CD4-positive, alpha-beta T cell (primary cell): ENCODE measurements at regions of chr1 and their contacts with region 1.

Region 1: DNA sequence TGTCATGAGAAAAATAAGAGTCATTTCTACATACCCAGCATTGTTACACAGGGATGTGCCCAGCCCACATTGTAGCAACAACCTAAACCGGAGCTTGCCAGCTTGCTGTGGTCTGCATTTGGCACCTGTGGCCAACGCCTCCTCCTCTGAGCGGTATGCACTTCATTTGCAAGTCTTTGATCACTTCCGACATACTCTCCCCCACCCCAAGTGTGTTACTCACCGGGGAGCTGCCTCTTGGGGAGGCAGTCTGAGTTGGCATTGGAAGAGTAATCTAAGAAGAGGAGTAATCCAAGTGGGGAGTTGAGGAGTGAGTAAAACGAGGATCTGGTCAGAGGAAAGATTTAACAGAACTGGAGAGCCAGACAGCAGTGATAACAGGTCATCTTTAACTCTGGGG is 3.8 kb downstream of the BCL9 start:
- DNase-seq: peak; percentile 64 to 95 (median 81)
- ATAC-seq: peak; percentile 80
- H3K4me3 ChIP-seq: no peak overlapping the region
- H3K4me3 Mint-ChIP-seq: no peak overlapping the region
- H3K27ac ChIP-seq: no peak overlapping the region
- H3K27ac Mint-ChIP-seq: no peak overlapping the region
- H3K4me1 ChIP-seq: peaks cover 56% of the 10 kb centered on the region
- H3K4me1 Mint-ChIP-seq: peaks cover 71% of the 10 kb centered on the region
- H3K27me3 ChIP-seq: no peaks in the 10 kb centered on the region
- H3K27me3 Mint-ChIP-seq: no peaks in the 10 kb centered on the region
- CTCF ChIP-seq: no peak

Region 2: GRCh38 chr1:147515046-147515869 is 29.9 kb before region 1 on chr1:
- CTCF ChIA-PET with region 1: interaction called, 3 read pairs
- POLR2A ChIA-PET with region 1: interaction called, 11 read pairs
- intact Hi-C with region 1: no loop called
- DNase-seq: peak in 4 of 14 experiments; percentile 34 to 55 (median 45)
- ATAC-seq: peak; percentile 70
- H3K4me3 ChIP-seq: no peak overlapping the region
- H3K4me3 Mint-ChIP-seq: no peak overlapping the region
- H3K27ac ChIP-seq: no peak overlapping the region
- H3K27ac Mint-ChIP-seq: no peak overlapping the region
- H3K4me1 ChIP-seq: no peaks in the 10 kb centered on the region
- H3K4me1 Mint-ChIP-seq: peaks cover 7% of the 10 kb centered on the region
- H3K27me3 ChIP-seq: no peaks in the 10 kb centered on the region
- H3K27me3 Mint-ChIP-seq: no peaks in the 10 kb centered on the region
- CTCF ChIP-seq: peak; percentile 67

Region 3: DNA sequence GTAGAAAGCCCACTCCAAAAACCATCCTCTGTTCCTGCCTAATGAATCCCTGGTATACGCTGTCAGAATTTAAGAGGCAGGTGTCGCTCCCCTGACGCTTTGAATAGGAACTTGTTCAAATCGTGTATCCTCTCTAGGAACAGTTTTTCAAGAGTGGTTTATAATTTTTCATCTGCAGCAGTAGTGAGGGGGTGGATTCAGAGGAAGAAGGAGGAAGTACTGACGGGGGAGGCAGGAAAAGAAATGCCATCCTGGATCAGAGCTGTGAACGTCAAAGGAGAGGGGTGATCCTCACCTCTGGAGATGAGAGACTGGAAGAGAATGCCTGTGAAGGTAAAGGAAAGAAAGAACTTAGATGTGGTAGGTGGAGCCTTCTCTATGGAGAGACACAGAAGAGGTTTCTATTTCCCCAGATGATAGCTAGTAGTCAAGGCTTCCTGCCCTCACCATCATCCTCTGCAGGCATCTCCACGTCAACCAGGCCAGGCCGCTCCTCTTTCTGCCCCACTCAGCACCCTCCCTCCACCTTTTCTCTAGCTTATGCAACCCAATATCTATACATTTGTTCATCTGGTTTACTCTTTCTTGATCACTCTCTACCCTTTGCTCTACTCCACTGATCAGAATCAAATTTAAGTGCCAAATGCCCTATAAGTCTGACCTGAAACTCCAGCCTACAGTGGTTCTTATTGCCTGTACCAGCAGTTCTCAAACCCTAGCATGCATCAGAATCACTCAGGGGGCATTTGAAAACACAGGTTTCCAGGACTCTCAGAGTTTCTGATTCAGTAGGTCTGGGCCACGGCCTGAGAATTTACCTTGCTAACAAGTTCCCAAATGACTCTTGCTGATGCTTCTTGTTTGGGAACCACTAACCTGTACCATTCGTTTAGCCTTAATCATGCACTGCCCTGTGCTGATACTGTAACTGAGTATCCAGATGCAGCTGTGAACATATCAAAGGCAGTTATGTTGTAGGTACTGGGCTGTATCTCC is 16.9 kb before region 1 on chr1:
- CTCF ChIA-PET with region 1: interaction called, 3 read pairs
- POLR2A ChIA-PET with region 1: interaction called, 21 read pairs
- intact Hi-C with region 1: no loop called
- DNase-seq: peak in 5 of 14 experiments; percentile 14 to 49 (median 34)
- ATAC-seq: peak; percentile 98
- H3K4me3 ChIP-seq: no peak overlapping the region
- H3K4me3 Mint-ChIP-seq: no peak overlapping the region
- H3K27ac ChIP-seq: no peak overlapping the region
- H3K27ac Mint-ChIP-seq: no peak overlapping the region
- H3K4me1 ChIP-seq: peaks cover 9% of the 10 kb centered on the region
- H3K4me1 Mint-ChIP-seq: no peaks in the 10 kb centered on the region
- H3K27me3 ChIP-seq: no peaks in the 10 kb centered on the region
- H3K27me3 Mint-ChIP-seq: no peaks in the 10 kb centered on the region
- CTCF ChIP-seq: no peak

Region 4: DNA sequence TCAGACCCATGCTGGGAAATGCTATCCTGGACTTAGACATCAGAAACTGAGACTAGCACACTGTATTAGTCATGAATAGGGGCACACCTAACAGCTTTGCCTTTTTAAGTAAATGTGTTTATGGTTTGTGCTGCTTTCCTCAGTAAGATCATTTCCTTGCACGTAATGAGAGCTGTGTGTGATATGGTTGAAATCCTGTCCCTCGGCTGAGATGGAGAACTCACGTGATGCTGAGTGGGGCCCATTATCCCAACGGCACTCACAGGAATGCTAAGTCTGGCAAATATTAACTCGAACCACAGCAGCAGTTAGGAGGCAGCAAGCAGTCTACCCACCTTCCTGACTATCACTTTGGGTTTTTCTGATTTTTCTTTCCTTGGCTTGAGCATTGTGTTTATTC is 34.4 kb after region 1 on chr1:
- CTCF ChIA-PET with region 1: no interaction called
- POLR2A ChIA-PET with region 1: interaction called, 6 read pairs
- intact Hi-C with region 1: loop called (anchors 1 to 5 kb)
- DNase-seq: no peak
- ATAC-seq: peak; percentile 59
- H3K4me3 ChIP-seq: no peak overlapping the region
- H3K4me3 Mint-ChIP-seq: no peak overlapping the region
- H3K27ac ChIP-seq: no peak overlapping the region
- H3K27ac Mint-ChIP-seq: no peak overlapping the region
- H3K4me1 ChIP-seq: peaks cover 16% of the 10 kb centered on the region
- H3K4me1 Mint-ChIP-seq: peaks cover 49% of the 10 kb centered on the region
- H3K27me3 ChIP-seq: peaks cover 3 to 12% of the 10 kb centered on the region in 2 experiments
- H3K27me3 Mint-ChIP-seq: peaks cover 42% of the 10 kb centered on the region
- CTCF ChIP-seq: no peak

Region 5: DNA sequence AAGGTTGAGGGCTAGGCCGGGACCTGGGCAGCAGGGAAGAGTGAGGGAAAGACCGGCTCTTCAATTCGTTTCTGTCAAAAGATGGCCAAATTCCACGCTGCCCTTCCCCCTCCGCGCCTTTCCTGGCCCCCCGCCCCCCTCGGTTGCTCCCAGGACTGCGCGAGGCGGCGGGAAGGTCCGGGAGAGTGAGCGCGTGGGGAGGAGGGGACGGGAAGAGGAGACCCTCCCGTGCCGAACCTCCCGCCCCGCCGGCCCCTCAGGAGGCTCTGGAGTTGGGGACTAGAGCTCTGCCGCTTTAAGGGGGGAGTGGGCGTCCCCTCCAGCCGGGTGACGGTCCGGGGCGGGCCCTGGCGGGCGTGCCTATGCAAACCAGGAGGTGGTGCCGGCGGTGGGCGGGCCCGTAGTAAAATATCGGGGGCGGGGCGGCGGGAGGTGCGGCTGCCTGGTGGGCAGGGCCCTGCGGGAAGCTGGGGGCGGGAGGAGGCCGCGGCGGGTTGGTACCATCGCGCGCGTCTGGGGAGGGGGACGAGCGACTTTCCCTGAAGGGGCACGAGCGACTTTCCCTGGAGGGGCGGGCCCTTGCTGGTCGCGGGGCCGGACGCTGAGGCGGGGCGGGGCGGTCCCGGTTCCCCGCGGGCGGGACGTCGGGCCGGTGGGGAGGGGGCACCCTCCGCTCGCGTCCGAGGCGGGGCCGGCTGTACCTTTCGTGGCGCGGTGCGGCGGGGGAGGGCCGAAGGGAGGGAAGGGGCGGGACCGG is 54.4 kb after region 1 on chr1:
- CTCF ChIA-PET with region 1: interaction called, 13 read pairs
- POLR2A ChIA-PET with region 1: interaction called, 194 read pairs
- intact Hi-C with region 1: loop called (anchors 1 kb)
- DNase-seq: peak; percentile 95 to 99 (median 97)
- ATAC-seq: peak; percentile 84
- H3K4me3 ChIP-seq: peak overlapping the region; percentile 91
- H3K4me3 Mint-ChIP-seq: peak overlapping the region; percentile 93
- H3K27ac ChIP-seq: peak overlapping the region in 1 of 2 donors; percentile 37
- H3K27ac Mint-ChIP-seq: peak overlapping the region; percentile 86
- H3K4me1 ChIP-seq: peaks cover 17% of the 10 kb centered on the region
- H3K4me1 Mint-ChIP-seq: peaks cover 33% of the 10 kb centered on the region
- H3K27me3 ChIP-seq: no peaks in the 10 kb centered on the region
- H3K27me3 Mint-ChIP-seq: no peaks in the 10 kb centered on the region
- CTCF ChIP-seq: no peak

Region 6: GRCh38 chr1:147670317-147671041 is 125.3 kb after region 1 on chr1 and contains the start of gene ACP6:
- CTCF ChIA-PET with region 1: no interaction called
- POLR2A ChIA-PET with region 1: interaction called, 19 read pairs
- intact Hi-C with region 1: no loop called
- DNase-seq: peak; percentile 71 to 93 (median 84)
- ATAC-seq: peak; percentile 96
- H3K4me3 ChIP-seq: peak within 1 kb of the TSS; percentile 85
- H3K4me3 Mint-ChIP-seq: peak within 1 kb of the TSS; percentile 97
- H3K27ac ChIP-seq: peak within 1 kb of the TSS; percentile 12 to 25
- H3K27ac Mint-ChIP-seq: peak within 1 kb of the TSS; percentile 72
- H3K4me1 ChIP-seq: peaks cover 11% of the 10 kb centered on the region
- H3K4me1 Mint-ChIP-seq: peaks cover 27% of the 10 kb centered on the region
- H3K27me3 ChIP-seq: no peaks in the 10 kb centered on the region
- H3K27me3 Mint-ChIP-seq: peaks cover 11% of the 10 kb centered on the region
- CTCF ChIP-seq: no peak
- total RNA-seq, gene ACP6: 4.6 to 6.9 TPM